ENCODE measurements at regions of chr6 and their contacts with region 1.

Region 1: DNA sequence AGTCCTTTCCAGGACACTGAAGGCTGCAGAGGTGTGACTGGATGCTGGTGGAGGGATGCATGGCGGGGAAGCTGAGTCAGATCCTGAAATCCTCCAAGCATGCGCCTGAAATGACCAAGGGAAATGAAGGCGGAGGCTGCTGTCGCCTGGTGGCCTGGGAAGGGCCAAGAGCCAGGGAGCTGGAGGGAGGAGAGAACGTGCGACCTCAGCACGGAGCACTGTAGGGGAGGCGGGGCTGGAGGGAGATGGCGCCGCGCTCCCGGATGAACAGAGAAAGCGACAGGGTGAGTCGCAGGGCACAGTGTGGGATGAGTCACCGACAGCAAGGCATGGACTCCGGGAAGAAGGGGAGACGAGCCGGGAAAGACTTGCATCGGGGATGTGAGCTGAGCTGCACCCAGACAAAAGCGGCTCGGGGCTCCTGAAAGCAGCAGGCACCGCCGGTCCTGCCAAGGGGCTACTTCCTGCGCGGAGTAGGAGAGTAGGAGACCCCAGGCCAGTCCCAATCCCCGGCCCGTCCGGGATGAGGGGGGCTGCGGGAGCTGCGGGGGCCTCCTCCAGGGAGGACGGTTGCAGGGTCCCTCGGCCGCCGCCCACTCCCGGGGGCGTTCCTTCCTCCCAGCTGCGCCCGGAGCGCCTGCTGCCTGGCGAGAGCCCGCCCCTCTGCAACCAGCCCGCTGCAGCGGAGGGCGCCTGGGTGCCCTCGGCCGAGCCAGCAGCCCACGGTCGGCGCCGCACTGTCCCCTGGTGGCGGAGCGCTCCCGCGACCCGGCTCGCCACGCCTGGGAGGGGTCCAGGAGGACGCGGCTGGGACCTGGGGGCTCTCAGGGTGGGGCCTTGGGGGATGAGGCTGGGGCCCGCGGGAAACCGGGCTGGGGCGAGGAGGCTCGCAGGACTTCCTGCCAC is 11.0 kb upstream of the NQO2 start:
- DNase-seq: peak; percentile 89
- H3K4me3 ChIP-seq: peak overlapping the region; percentile 69
- H3K27me3 ChIP-seq: no peaks in the 10 kb centered on the region
- CTCF ChIP-seq: peak; percentile 63

Region 2: GRCh38 chr6:2841264-2842138 is 147.2 kb before region 1 on chr6 and contains the start of gene SERPINB1:
- CTCF ChIA-PET with region 1: interaction called, 53 read pairs
- POLR2A ChIA-PET with region 1: interaction called, 3 read pairs
- DNase-seq: peak; percentile 84
- H3K4me3 ChIP-seq: peak within 1 kb of the TSS; percentile 55
- H3K27me3 ChIP-seq: no peaks in the 10 kb centered on the region
- CTCF ChIP-seq: no peak
- polyA plus RNA-seq, gene SERPINB1: 17.9 and 31.3 TPM in 2 replicates

Region 3: DNA sequence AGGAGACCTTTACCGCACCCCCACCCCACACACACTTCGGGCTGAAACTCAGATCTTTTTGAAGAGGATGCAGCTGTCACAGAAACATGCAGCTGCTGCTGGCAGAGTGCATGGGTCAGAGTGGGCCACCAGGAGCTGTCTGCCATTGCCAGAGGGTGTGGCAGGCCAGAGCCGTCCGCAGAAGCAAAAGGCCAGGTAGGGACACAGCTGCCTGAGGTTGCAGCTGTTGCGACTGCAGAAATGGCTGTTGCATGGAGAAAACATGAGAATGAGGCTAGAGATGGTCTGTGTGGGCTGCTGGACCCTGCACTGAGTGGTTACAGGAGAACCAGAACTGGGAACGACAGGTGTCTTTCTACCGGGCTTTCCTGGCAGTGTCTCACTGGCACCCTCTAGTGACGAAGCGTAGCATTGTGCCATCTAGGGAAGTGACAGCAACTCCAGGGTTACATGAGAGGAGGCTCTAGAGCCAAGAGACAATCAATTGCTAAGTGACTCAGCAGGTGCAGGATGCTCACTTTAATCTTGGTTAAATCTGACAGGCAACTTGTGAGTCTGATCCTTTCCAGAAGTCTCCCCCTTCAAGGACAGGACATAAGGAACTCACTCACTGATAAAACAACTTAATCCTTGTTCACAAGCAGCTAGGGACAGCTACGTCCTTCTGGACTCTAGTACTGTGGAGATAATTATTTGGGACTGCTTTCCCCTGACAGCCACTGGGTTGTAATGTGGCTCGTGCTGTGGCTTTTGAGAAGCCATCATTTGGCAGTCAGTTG is 56.5 kb before region 1 on chr6:
- CTCF ChIA-PET with region 1: interaction called, 23 read pairs
- POLR2A ChIA-PET with region 1: no interaction called
- DNase-seq: peak; percentile 9
- H3K4me3 ChIP-seq: no peak overlapping the region
- H3K27me3 ChIP-seq: 0 out of 2 replicates have a peak, but pooled peaks cover 2% of the 10 kb centered on the region
- CTCF ChIP-seq: peak; percentile 99

Region 4: DNA sequence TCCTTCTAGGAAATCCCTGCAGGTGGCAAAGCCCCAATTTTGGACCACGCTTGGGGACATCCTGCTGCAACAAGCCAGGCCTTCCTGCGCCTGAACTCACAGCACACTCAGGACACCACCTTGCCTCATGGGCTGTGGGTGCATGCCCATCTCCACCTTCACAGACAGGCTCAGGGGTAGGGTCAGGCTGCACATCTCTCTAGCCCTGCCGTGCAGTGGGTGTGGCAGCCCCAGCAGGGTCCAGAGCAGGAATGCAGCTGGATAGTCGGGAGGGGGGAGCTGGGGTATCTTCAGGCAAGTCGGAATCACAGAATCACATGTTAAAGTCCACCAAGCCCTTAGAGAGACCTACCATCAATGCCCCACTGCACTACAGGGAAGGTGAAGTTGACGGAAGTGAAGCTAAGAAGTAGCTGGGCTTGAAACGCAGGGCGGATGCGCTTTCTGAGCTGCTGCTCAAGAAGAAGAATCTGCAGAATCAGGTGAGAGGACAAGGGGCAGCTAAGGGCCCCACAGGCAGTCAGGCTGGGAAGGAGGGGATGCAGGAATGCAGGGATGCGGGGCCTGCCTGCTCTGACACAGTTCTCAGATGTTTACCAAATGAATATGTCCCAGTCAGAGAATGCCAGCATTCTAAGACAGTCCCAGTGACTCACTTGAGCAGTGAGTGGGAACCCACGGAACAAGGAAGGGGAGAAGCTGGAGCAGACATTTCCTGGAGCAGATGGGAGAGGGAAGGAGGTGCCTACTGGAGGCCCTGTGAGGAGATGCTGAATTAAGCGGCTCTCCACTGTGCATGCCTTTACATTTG is 28.6 kb before region 1 on chr6:
- CTCF ChIA-PET with region 1: interaction called, 191 read pairs
- POLR2A ChIA-PET with region 1: no interaction called
- DNase-seq: peak; percentile 49
- H3K4me3 ChIP-seq: no peak overlapping the region
- H3K27me3 ChIP-seq: no peaks in the 10 kb centered on the region
- CTCF ChIP-seq: no peak

Region 5: DNA sequence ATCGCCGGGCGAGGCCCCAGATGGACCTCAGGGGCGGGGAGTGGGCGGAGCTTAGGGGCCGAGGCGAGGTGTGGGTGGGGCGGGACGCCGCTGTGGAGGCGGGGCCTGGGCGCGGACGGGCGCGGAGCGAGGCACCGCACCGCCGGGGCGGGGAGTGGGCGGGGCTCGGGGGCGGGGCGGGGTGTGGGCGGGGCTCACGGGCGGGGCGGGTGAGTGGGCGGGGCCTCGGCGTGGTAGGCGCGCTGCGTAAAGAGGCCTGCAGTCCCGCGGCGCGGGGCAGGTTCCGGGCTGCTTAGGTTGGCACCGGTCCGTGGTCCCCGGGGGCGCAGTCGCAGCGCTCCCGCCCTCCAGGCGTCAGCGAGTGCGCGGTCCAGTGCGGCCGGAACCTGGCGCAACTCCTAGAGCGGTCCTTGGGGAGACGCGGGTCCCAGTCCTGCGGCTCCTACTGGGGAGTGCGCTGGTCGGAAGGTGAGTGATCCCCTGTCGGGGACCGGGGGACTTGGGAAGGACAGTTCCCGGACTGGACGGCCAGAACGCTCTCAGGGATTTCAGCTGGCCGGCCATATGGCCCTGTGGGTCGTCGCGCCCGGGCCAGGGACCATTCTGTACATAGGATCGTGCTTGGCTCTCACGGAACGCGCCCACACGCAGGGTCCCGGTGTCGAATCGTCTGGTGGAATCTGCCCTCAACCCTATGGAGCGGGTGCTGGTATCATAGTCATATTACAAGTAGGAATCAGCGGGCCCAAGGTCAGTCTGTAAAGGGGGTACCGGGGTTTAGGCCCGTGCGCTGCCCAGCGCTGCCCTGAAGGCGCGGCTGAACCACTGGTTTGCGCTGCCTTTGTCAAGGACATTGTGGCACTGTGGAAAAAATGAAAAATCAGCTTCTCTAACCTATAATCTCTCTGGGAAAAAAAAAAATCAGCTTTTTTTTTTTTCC is 11.2 kb after region 1 on chr6 and contains the start of gene NQO2:
- CTCF ChIA-PET with region 1: interaction called, 18 read pairs
- POLR2A ChIA-PET with region 1: interaction called, 5 read pairs
- DNase-seq: no peak
- H3K4me3 ChIP-seq: peak within 1 kb of the TSS; percentile 87
- H3K27me3 ChIP-seq: no peaks in the 10 kb centered on the region
- CTCF ChIP-seq: no peak
- polyA plus RNA-seq, gene NQO2: 54.4 and 56.2 TPM in 2 replicates

Region 6: GRCh38 chr6:3534599-3534998 is 545.9 kb after region 1 on chr6:
- CTCF ChIA-PET with region 1: no interaction called
- POLR2A ChIA-PET with region 1: no interaction called
- DNase-seq: no peak
- H3K4me3 ChIP-seq: no peak overlapping the region
- H3K27me3 ChIP-seq: peaks cover 8% of the 10 kb centered on the region
- CTCF ChIP-seq: no peak